Left colon (tissue), 2 donors: ENCODE measurements at regions of chr9 and their contacts with region 1.

Region 1: DNA sequence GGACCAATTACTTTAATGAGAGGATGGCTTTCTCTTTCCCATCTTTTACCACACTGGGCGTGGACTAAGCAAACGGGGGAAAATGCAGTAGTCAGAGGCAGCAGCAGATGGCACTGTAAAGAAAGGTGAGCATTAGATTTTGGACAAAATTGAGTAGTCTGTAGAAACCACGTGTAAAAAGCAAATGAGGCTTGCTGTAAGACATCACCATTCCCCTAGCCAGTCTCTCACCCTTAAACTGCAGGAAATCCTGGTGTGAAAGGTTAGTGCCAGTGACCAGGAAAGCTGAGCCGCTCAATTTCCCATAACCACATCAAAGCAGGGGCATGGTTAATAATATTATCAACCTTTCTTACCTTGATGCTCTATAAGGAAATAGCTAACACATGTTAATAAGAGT is 31.8 kb downstream of the SPATA31C2 start:
- DNase-seq: peak; percentile 39 to 63
- ATAC-seq: peak; percentile 99

Region 2: GRCh38 chr9:88041447-88041846 is 65.0 kb before region 1 on chr9:
- intact Hi-C with region 1: no loop called
- DNase-seq: no peak
- ATAC-seq: peak; percentile 44

Region 3: DNA sequence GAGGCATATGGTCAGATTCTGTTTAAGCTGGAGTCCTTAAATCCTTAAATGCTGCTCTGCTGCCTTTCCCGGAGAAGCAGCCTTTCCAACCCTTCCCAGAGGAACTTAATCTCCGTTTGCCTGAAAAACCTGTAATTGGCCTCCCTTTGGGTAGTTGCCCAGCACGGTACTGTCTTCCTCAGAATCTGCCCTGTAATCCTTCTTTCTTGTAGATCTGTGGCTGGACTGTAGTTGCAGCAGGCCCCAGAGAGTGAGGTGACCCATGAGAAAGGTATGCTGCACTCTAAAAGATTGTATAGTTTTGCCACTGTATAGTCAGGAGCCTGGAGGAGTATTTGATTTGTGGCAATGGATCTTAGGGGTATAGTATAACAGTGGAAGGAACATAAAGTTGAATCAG is 293.5 kb after region 1 on chr9:
- intact Hi-C with region 1: loop called in 1 of 2 experiments (anchors 10 kb)
- DNase-seq: no peak
- ATAC-seq: no peak

Region 4: GRCh38 chr9:88578121-88579054 is 471.9 kb after region 1 on chr9:
- intact Hi-C with region 1: loop called in 1 of 2 experiments (anchors 10 kb)
- DNase-seq: peak; percentile 56 to 86
- ATAC-seq: peak; percentile 97